ENCODE measurements at regions of chr10 and their contacts with region 1.

Region 1: DNA sequence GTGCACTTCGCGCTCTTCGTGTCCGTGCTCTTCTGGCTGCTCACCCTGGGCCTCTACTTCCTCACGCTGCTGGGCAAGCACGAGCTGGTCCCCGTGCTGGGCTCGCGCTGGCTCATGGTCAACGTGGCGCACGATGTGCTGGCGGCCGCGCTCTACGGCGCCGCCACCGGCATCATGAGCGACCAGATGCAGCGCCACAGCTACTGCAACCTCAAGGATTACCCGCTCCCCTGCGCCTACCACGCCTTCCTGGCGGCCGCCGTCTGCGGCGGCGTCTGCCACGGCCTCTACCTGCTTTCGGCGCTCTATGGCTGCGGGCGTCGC is 480 bp downstream of the MARVELD1 start:
- DNase-seq: peak; percentile 56
- H3K4me3 Mint-ChIP-seq: peak overlapping the region; percentile 93
- H3K27ac Mint-ChIP-seq: peak overlapping the region; percentile 84
- H3K4me1 Mint-ChIP-seq: peaks cover 15% of the 10 kb centered on the region
- H3K27me3 Mint-ChIP-seq: peaks cover 28% of the 10 kb centered on the region

Region 2: GRCh38 chr10:97434055-97434454 is 280.0 kb before region 1 on chr10:
- CTCF ChIA-PET with region 1: no interaction called
- POLR2A ChIA-PET with region 1: no interaction called
- DNase-seq: no peak
- H3K4me3 Mint-ChIP-seq: no peak overlapping the region
- H3K27ac Mint-ChIP-seq: no peak overlapping the region
- H3K4me1 Mint-ChIP-seq: peaks cover 14% of the 10 kb centered on the region
- H3K27me3 Mint-ChIP-seq: no peaks in the 10 kb centered on the region

Region 3: DNA sequence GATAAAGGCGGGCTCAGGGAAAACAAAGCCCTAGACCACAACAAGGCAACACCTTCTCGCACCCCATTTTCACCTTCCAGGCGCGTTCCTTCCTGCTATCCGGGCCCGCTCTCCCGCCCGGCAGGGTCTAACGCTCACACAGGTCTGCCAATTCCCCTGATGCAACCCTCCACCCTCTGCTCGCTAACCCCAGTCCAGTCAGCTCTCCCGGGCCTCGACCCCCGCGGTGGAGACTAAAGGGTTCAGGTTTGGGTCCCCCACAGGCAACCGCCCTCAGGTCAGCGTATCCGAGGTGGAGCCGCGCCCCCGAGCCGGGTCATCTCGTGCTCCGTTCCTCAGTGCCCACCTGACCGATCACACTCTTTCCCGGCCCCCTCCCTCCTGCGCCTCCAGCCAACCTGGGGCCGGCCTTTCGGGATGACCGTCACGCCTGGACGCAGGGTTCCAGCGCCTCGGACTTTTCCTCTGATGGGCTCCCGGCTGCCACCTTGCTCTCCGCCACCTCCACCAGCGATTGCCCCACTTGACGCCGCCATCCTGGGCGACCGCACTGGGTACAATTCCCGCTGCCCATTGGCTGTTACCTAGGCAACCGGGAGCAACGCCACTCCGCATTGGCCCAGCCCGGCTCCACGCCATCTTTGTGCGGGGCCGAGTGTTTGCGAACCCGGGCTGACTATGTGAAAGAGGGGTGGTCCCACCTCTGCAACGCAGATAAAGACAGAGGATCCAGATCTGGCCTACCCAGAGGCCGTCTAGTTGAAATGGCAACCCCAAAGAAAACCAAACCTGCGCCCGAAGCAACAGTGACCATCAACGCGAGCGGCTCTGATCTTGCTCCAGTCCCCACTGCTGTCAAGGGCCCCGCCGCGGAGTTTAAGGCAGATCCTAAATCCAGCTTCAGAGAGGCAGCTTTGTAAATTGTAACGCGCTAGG is 80.8 kb before region 1 on chr10 and contains the start of gene MORN4:
- CTCF ChIA-PET with region 1: no interaction called
- POLR2A ChIA-PET with region 1: no interaction called
- DNase-seq: peak; percentile 94
- H3K4me3 Mint-ChIP-seq: peak within 1 kb of the TSS; percentile 93
- H3K27ac Mint-ChIP-seq: peak within 1 kb of the TSS; percentile 87
- H3K4me1 Mint-ChIP-seq: peaks cover 18% of the 10 kb centered on the region
- H3K27me3 Mint-ChIP-seq: no peaks in the 10 kb centered on the region
- total RNA-seq, gene MORN4: 1.2 to 1.3 TPM

Region 4: GRCh38 chr10:97726636-97727178 is 12.7 kb after region 1 on chr10:
- CTCF ChIA-PET with region 1: interaction called, 19 read pairs
- POLR2A ChIA-PET with region 1: no interaction called
- DNase-seq: no peak
- H3K4me3 Mint-ChIP-seq: no peak overlapping the region
- H3K27ac Mint-ChIP-seq: no peak overlapping the region
- H3K4me1 Mint-ChIP-seq: peaks cover 2% of the 10 kb centered on the region
- H3K27me3 Mint-ChIP-seq: peaks cover 12% of the 10 kb centered on the region

Region 5: GRCh38 chr10:97736902-97737769 is 23.1 kb after region 1 on chr10 and contains the start of gene ZFYVE27:
- CTCF ChIA-PET with region 1: interaction called, 15 read pairs
- POLR2A ChIA-PET with region 1: no interaction called
- DNase-seq: peak; percentile 95
- H3K4me3 Mint-ChIP-seq: peak within 1 kb of the TSS; percentile 92
- H3K27ac Mint-ChIP-seq: peak within 1 kb of the TSS; percentile 96
- H3K4me1 Mint-ChIP-seq: peaks cover 44% of the 10 kb centered on the region
- H3K27me3 Mint-ChIP-seq: no peaks in the 10 kb centered on the region
- total RNA-seq, gene ZFYVE27: 23.9 to 31.9 TPM